HepG2 (cell line): ENCODE measurements at regions of chr13 and their contacts with region 1.

Region 1: GRCh38 chr13:39655569-39656324 is at the start of gene COG6:
- DNase-seq: peak; percentile 73
- ATAC-seq: peak; percentile 98
- H3K4me3 ChIP-seq: peak within 1 kb of the TSS; percentile 84 to 94 (median 84)
- H3K27ac ChIP-seq: peak within 1 kb of the TSS; percentile 48
- H3K4me1 ChIP-seq: peaks cover 30% of the 10 kb centered on the region
- H3K27me3 ChIP-seq: no peaks in the 10 kb centered on the region; a peak in 1 of 5 replicates
- CTCF ChIP-seq: peak; percentile 42
- EP300 ChIP-seq: no peak
- POLR2A ChIP-seq: peak; percentile 52 to 93; a peak in 3 of 4 replicates
- RAD21 ChIP-seq: no peak
- total RNA-seq, gene COG6: 23.5 and 34.7 TPM in 2 replicates

Region 2: GRCh38 chr13:39037880-39038568 is 617.7 kb before region 1 on chr13 and contains the starts of genes NHLRC3 and PROSER1:
- CTCF ChIA-PET with region 1: no interaction called
- POLR2A ChIA-PET with region 1: no interaction called
- in situ Hi-C with region 1: no loop called
- intact Hi-C with region 1: loop called (anchors 10 kb)
- DNase-seq: peak; percentile 84
- ATAC-seq: peak; percentile 92
- H3K4me3 ChIP-seq: peak within 1 kb of the TSS; percentile 84 to 95 (median 86)
- H3K27ac ChIP-seq: peak within 1 kb of the TSS; percentile 88
- H3K4me1 ChIP-seq: peaks cover 39% of the 10 kb centered on the region
- H3K27me3 ChIP-seq: no peaks in the 10 kb centered on the region; a peak in 1 of 5 replicates
- CTCF ChIP-seq: no peak
- EP300 ChIP-seq: no peak
- POLR2A ChIP-seq: peak; percentile 44 to 74; a peak in 3 of 4 replicates
- RAD21 ChIP-seq: no peak
- total RNA-seq, gene NHLRC3: 14.5 and 29.8 TPM in 2 replicates
- total RNA-seq, gene PROSER1: 11.4 and 15.2 TPM in 2 replicates